ENCODE measurements at regions of chr1 and their contacts with region 1.

Region 1: DNA sequence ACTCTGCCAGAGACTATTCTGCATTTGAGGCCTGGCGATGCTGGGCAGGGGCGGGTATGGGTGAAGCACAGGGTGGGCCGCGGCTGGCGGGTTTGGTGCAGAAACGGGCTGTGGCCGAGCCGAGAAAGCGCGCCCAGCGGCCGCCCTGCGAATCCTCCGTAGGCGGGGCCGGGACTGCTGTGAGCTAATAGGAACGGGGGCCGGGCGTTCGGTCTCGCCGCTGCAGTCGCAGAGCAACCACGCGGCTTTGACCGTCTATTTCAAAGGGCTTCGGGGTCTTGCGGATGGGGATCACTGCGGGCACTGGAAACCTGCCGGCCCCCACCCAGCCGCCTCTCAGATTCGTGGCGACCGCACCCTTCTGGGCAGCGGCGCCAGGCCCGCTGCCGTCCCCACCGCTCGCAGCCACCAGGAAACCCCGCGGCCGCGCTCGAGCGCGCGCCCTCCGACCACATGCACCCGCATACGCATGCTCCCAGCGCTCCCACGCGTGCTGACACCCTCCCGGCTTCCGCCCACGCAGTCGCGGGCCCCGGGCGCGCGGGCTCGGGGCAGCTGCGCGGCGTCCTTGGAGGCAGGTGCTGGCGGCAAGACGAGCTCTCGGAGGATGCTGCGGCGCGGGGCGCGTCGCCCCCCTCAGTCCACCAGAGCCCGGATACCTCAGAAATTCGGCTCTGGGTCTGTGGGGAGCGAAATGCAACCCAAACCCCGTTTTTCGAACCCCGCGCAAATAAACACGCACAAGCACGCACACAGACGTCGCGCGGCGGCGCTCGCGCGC is 32.6 kb downstream of the DNTTIP2 start:
- DNase-seq: peak; percentile 89
- ATAC-seq: peak; percentile 68
- H3K4me3 Mint-ChIP-seq: peak overlapping the region; percentile 95
- H3K27ac Mint-ChIP-seq: no peak overlapping the region
- H3K4me1 Mint-ChIP-seq: peaks cover 13% of the 10 kb centered on the region
- H3K27me3 Mint-ChIP-seq: peaks cover 5% of the 10 kb centered on the region
- CTCF ChIP-seq: no peak

Region 2: GRCh38 chr1:93304716-93305138 is 541.7 kb before region 1 on chr1:
- CTCF ChIA-PET with region 1: interaction called, 13 read pairs
- POLR2A ChIA-PET with region 1: no interaction called
- DNase-seq: peak; percentile 26
- ATAC-seq: peak; percentile 52; the same call in 1 of the 2 replicates
- H3K4me3 Mint-ChIP-seq: no peak overlapping the region
- H3K27ac Mint-ChIP-seq: no peak overlapping the region; the same call in 1 of the 2 replicates
- H3K4me1 Mint-ChIP-seq: peaks cover 26% of the 10 kb centered on the region
- H3K27me3 Mint-ChIP-seq: no peaks in the 10 kb centered on the region
- CTCF ChIP-seq: peak; percentile 86

Region 3: GRCh38 chr1:93629099-93630059 is 217.0 kb before region 1 on chr1:
- CTCF ChIA-PET with region 1: interaction called, 119 read pairs
- POLR2A ChIA-PET with region 1: interaction called, 3 read pairs
- DNase-seq: no peak
- ATAC-seq: peak; percentile 76
- H3K4me3 Mint-ChIP-seq: no peak overlapping the region
- H3K27ac Mint-ChIP-seq: peak overlapping the region; percentile 47; the same call in 1 of the 2 replicates
- H3K4me1 Mint-ChIP-seq: peaks cover 7% of the 10 kb centered on the region; the same call in 1 of the 2 replicates
- H3K27me3 Mint-ChIP-seq: no peaks in the 10 kb centered on the region
- CTCF ChIP-seq: peak; percentile 62

Region 4: DNA sequence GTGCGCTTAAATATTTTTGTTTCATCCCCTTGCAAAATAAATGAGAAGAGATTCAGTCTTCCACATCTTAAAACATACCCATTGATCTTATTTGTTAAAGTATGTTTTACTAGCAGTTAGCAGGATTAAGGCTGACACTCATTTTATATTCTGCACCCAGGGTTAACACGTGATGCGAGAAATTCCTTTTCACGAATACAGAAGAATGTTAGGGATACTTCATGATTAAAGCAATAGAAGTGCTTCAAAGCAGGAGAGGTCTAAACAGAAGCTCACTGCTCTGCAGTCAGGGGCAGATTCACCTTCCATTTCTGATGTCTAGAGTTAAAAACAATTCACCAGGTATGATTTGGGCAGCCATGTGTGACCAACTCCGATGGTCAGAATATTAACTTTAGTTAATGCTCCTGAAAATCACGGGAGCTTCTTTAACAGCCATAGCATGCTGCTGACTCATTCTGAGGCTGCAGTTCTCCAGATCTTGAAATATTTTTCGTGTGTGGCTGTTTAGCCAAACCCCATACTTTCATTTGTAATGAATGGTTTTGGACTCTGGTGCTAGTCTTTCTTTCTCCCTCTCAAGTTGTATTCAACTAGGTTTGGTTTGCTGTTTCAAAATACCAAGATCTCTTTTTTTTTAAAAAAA is 184.4 kb before region 1 on chr1:
- CTCF ChIA-PET with region 1: interaction called, 11 read pairs
- POLR2A ChIA-PET with region 1: no interaction called
- DNase-seq: no peak
- ATAC-seq: no peak
- H3K4me3 Mint-ChIP-seq: no peak overlapping the region
- H3K27ac Mint-ChIP-seq: peak overlapping the region; percentile 25
- H3K4me1 Mint-ChIP-seq: peaks cover 51% of the 10 kb centered on the region
- H3K27me3 Mint-ChIP-seq: no peaks in the 10 kb centered on the region
- CTCF ChIP-seq: no peak

Region 5: DNA sequence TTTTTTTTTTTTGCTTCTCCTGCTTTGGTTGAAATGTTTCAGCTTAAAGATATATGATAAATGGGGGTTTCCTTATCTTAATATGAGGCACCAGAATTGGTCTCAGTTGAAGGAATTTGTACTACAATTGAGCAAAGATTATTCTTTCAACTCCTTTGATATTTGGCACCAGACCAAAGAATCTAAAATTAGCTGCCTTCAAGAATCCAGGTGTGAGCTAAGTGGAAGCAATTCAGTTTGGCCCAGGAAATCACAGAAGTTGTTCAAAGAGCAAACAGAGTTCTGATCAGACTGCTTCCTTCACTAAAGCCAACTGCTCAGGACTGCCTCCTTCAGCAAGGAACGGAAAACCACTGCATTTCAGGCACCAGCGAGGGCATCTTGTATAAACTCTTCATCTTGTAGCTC is 96.5 kb before region 1 on chr1:
- CTCF ChIA-PET with region 1: interaction called, 15 read pairs
- POLR2A ChIA-PET with region 1: no interaction called
- DNase-seq: peak; percentile 41
- ATAC-seq: peak; percentile 73
- H3K4me3 Mint-ChIP-seq: no peak overlapping the region
- H3K27ac Mint-ChIP-seq: peak overlapping the region; percentile 26
- H3K4me1 Mint-ChIP-seq: peaks cover 4% of the 10 kb centered on the region
- H3K27me3 Mint-ChIP-seq: peaks cover 5% of the 10 kb centered on the region; the same call in 1 of the 2 replicates
- CTCF ChIP-seq: no peak

Region 6: DNA sequence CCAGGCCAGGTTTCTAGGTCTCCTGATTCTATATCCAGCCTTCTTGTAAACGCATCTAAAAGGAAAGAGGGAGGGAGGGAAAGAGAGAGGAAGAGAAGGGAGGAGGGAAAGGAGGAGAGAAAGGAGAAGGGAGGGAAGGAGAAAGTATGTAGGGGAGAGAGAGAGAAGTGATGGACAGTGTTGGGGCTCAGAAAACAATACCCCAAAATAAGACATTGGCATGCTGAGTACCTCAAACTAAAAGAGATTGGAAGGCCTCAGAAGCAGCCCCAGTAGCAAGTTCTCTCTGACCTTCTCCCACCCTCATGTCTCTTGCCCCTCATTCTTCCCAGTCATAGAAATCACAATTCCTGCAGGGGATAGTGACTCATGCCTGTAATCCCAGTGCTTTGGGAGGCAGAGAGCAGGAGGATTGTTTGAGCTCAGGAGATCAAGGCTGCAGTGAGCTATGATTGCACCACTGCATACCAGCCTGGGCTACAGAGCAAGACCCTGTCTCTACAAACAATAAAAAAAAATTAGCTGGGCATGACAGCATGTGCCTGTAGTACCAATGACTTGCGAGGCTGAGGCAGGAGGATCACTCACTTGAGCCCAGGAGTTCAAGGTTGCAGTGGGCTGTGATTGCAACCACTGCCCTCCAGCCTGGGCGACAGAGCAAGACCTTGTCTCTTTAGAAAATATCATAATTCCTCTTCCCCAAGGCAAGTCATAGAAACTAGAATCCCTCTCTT is 18.6 kb before region 1 on chr1:
- CTCF ChIA-PET with region 1: interaction called, 12 read pairs
- POLR2A ChIA-PET with region 1: no interaction called
- DNase-seq: no peak
- ATAC-seq: no peak
- H3K4me3 Mint-ChIP-seq: no peak overlapping the region
- H3K27ac Mint-ChIP-seq: peak overlapping the region; percentile 28; the same call in 1 of the 2 replicates
- H3K4me1 Mint-ChIP-seq: peaks cover 57% of the 10 kb centered on the region
- H3K27me3 Mint-ChIP-seq: peaks cover 13% of the 10 kb centered on the region
- CTCF ChIP-seq: no peak

Region 7: DNA sequence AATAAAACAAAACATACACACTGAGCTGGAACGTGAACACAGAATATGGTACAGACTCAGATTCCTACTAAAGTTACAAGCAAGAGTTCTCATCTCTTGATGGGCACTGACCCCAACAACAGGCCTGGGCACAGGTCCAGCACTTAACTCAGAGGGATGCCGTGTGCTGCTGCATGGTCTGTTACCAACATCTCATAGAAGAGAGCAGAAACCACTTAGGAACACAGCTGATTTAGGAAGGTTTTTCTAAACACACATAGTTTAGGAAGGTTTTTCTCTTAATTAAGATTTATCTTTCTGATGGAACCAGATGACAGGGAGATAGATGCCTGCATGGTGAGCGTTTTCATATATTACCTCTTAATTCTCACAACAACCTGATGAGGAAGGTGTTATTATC is 61.3 kb after region 1 on chr1:
- CTCF ChIA-PET with region 1: no interaction called
- POLR2A ChIA-PET with region 1: no interaction called
- DNase-seq: no peak
- ATAC-seq: no peak
- H3K4me3 Mint-ChIP-seq: peak overlapping the region; percentile 82
- H3K27ac Mint-ChIP-seq: no peak overlapping the region
- H3K4me1 Mint-ChIP-seq: peaks cover 25% of the 10 kb centered on the region
- H3K27me3 Mint-ChIP-seq: peaks cover 10% of the 10 kb centered on the region; the same call in 1 of the 2 replicates
- CTCF ChIP-seq: no peak

Measured in WTC11 (cell line).